A549 (cell line): ENCODE measurements at regions of chr7 and their contacts with region 1.

Region 1: GRCh38 chr7:38222481-38223096 is 44.5 kb downstream of the STARD3NL start:
- DNase-seq: peak; percentile 48 to 67
- ATAC-seq: peak; percentile 81 to 84; a peak in 5 of 6 replicates
- H3K4me3 ChIP-seq: no peak overlapping the region
- H3K27ac ChIP-seq: no peak overlapping the region
- H3K4me1 ChIP-seq: peaks cover 4% of the 10 kb centered on the region; the same call in 2 of the 3 replicates
- CTCF ChIP-seq: peak; percentile 95
- EP300 ChIP-seq: no peak
- POLR2A ChIP-seq: no peak
- RAD21 ChIP-seq: peak; percentile 89 to 90

Region 2: DNA sequence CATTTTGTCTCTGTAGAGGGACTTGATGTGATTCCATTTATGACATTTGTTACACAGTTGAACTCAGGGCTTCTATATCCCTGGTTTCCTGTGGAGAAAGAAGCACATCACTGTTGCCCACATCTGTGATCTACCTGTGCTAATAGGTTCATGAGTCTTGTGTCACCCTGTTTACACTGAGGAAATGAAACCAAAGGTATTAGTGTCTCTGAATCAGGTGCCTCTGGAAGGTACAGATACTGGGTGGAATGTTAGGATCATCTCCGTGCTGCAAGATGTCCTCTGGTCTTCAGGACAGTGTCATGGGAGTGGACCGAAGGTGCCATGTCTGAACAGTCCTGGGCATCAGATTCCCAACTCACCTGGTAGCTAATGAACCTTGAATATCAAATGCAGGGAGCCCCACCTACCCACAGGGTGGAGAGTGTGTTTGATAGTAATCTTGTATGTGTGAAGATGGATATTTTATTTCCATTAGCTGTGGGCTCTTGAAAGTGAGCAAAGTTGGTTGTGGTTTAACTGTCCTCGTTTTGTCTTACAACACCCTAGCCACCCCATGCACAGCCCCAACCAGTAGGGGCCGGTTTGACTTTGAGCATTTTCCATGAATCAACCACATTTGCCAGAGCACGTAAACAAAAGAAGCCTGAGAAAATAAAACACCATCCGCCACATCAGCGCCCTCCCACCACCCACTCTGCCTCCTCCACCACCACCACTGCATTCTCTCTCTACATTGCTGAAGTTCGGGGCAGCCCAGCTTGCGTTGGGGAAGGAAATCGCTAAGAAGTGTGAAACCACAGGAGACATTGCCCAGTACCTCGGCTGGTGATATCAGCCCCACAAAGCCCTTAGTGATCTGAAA is 10.1 kb after region 1 on chr7:
- CTCF ChIA-PET with region 1: interaction called, 17 read pairs
- POLR2A ChIA-PET with region 1: interaction called, 4 read pairs
- DNase-seq: no peak
- ATAC-seq: no peak; a peak in 2 of 6 replicates
- H3K4me3 ChIP-seq: no peak overlapping the region
- H3K27ac ChIP-seq: no peak overlapping the region
- H3K4me1 ChIP-seq: no peaks in the 10 kb centered on the region
- CTCF ChIP-seq: no peak
- EP300 ChIP-seq: no peak
- POLR2A ChIP-seq: no peak
- RAD21 ChIP-seq: no peak